ENCODE measurements at regions of chr6 and their contacts with region 1.

Region 1: GRCh38 chr6:45421709-45422502 is 44.2 kb upstream of the SUPT3H start:
- DNase-seq: peak; percentile 75
- ATAC-seq: peak; percentile 23
- H3K4me3 Mint-ChIP-seq: peak overlapping the region; percentile 90
- H3K27ac Mint-ChIP-seq: peak overlapping the region; percentile 94
- H3K4me1 Mint-ChIP-seq: peaks cover 36% of the 10 kb centered on the region
- H3K27me3 Mint-ChIP-seq: peaks cover 11% of the 10 kb centered on the region

Region 2: GRCh38 chr6:44475779-44476434 is 946.0 kb before region 1 on chr6:
- CTCF ChIA-PET with region 1: interaction called, 6 read pairs
- POLR2A ChIA-PET with region 1: no interaction called
- intact Hi-C with region 1: loop called in 1 of 2 experiments (anchors 2 kb)
- DNase-seq: peak; percentile 86
- ATAC-seq: peak; percentile 94
- H3K4me3 Mint-ChIP-seq: no peak overlapping the region
- H3K27ac Mint-ChIP-seq: no peak overlapping the region
- H3K4me1 Mint-ChIP-seq: no peaks in the 10 kb centered on the region
- H3K27me3 Mint-ChIP-seq: no peaks in the 10 kb centered on the region

Region 3: GRCh38 chr6:44655412-44656342 is 766.2 kb before region 1 on chr6:
- CTCF ChIA-PET with region 1: interaction called, 5 read pairs
- POLR2A ChIA-PET with region 1: no interaction called
- intact Hi-C with region 1: loop called (anchors 1 kb)
- DNase-seq: peak; percentile 85
- ATAC-seq: peak; percentile 77
- H3K4me3 Mint-ChIP-seq: no peak overlapping the region
- H3K27ac Mint-ChIP-seq: peak overlapping the region; percentile 75
- H3K4me1 Mint-ChIP-seq: peaks cover 13% of the 10 kb centered on the region
- H3K27me3 Mint-ChIP-seq: peaks cover 4% of the 10 kb centered on the region

Region 4: GRCh38 chr6:45163952-45164766 is 257.7 kb before region 1 on chr6:
- CTCF ChIA-PET with region 1: no interaction called
- POLR2A ChIA-PET with region 1: no interaction called
- intact Hi-C with region 1: loop called (anchors 5 kb)
- DNase-seq: peak; percentile 61
- ATAC-seq: peak; percentile 92
- H3K4me3 Mint-ChIP-seq: peak overlapping the region; percentile 21
- H3K27ac Mint-ChIP-seq: peak overlapping the region; percentile 93
- H3K4me1 Mint-ChIP-seq: peaks cover 47% of the 10 kb centered on the region
- H3K27me3 Mint-ChIP-seq: no peaks in the 10 kb centered on the region

Region 5: DNA sequence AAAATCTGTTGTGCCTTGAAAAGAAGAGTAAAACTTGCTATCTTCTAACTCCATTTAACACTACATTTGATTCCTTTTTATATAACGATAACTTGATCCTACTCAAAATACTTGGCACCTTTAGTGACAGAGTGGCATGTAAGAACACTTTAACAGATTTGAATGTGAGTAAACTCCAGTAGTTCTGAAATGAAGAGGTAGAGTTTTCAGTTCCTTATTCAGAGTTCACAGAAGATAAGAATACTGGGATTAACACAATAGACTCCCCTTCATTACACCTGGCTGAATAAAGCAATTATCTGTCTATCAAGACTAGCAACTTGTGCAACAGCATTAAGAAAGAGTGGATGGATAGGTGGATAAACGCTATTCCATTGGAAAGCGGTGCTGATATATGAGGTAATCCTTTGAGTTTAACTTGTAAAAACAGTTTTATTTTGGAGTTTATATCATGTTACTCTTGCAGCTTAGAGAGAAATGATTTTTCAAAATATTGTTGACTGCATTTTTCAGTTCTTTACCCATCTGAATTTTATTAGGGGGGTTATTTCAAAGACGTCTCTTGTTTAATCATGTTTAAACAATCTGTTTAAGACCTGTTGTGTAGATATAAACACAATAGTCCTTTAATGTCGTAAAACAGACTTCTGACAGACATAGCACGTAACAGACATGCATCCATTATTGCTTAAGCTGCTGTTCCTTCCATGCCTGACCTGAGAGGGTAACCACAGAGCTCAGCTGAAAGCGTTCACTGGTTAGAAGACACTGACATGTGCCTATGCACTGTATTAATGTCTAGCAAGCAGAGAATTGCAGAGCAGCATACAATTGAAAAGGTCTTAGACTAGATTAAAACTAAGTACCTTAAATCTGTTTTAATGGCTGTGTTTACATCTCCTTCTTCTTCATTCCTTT is 58.2 kb after region 1 on chr6:
- CTCF ChIA-PET with region 1: no interaction called
- POLR2A ChIA-PET with region 1: interaction called, 3 read pairs
- intact Hi-C with region 1: loop called in 1 of 2 experiments (anchors 2 kb)
- DNase-seq: peak; percentile 18
- ATAC-seq: peak; percentile 47
- H3K4me3 Mint-ChIP-seq: no peak overlapping the region
- H3K27ac Mint-ChIP-seq: peak overlapping the region; percentile 44
- H3K4me1 Mint-ChIP-seq: peaks cover 34% of the 10 kb centered on the region
- H3K27me3 Mint-ChIP-seq: no peaks in the 10 kb centered on the region

Region 6: DNA sequence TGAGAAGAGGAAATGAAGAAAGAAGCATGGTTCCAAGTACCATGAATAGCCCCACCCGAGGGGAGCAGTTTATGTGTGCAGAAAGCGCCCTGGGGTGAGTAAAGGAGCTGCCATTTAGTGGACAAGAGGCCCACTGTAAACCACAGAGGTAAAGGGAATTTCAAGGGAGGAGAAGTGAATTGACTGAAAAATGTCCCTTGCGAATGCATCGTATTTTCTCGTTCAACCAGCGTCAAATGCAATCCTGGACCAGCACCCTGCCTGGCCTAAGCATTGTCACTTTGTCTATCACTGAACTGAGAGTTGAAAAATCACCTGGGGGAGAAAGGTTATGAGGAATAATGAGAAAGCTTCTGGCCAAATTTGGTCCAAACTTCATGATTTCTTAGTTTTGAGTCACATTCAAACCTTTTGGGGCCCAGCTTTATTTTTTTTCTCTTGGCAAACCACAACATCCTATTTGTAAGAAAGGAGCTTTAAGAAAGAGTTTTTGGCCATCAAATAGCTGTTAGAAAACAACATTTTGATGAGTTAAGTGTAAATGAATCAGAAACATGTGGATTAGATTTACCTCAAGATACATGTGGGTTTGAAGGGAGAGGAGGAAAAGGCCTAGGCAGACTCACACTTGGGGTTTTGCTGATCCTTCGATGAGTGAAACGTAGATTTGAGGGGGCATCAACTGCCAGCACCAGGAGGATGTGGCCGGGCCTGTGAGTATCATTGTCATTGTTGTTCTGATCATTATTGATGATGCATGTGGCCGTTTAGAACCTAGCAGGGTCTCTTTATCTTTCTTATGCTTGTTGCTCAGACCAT is 379.8 kb after region 1 on chr6:
- CTCF ChIA-PET with region 1: no interaction called
- POLR2A ChIA-PET with region 1: interaction called, 5 read pairs
- intact Hi-C with region 1: loop called (anchors 2 to 5 kb)
- DNase-seq: peak; percentile 80
- ATAC-seq: peak; percentile 82
- H3K4me3 Mint-ChIP-seq: no peak overlapping the region
- H3K27ac Mint-ChIP-seq: peak overlapping the region; percentile 72
- H3K4me1 Mint-ChIP-seq: peaks cover 22% of the 10 kb centered on the region
- H3K27me3 Mint-ChIP-seq: peaks cover 2% of the 10 kb centered on the region